Panc1 (cell line): ENCODE measurements at regions of chr20 and their contacts with region 1.

Region 1: GRCh38 chr20:60729135-60729900 is 522.7 kb upstream of the CDH4 start:
- DNase-seq: no peak
- ATAC-seq: no peak
- H3K4me3 ChIP-seq: no peak overlapping the region
- H3K27ac ChIP-seq: no peak overlapping the region
- H3K4me1 ChIP-seq: no peaks in the 10 kb centered on the region
- H3K27me3 ChIP-seq: no peaks in the 10 kb centered on the region
- CTCF ChIP-seq: no peak

Region 2: GRCh38 chr20:60632391-60633262 is 96.7 kb before region 1 on chr20:
- CTCF ChIA-PET with region 1: no interaction called
- POLR2A ChIA-PET with region 1: no interaction called
- in situ Hi-C with region 1: no loop called
- intact Hi-C with region 1: no loop called
- DNase-seq: no peak
- ATAC-seq: no peak
- H3K4me3 ChIP-seq: no peak overlapping the region
- H3K27ac ChIP-seq: no peak overlapping the region
- H3K4me1 ChIP-seq: no peaks in the 10 kb centered on the region
- H3K27me3 ChIP-seq: no peaks in the 10 kb centered on the region; the same call in 1 of the 2 replicates
- CTCF ChIP-seq: no peak

Region 3: GRCh38 chr20:60718743-60719322 is 10.5 kb before region 1 on chr20:
- CTCF ChIA-PET with region 1: interaction called, 11 read pairs
- POLR2A ChIA-PET with region 1: no interaction called
- in situ Hi-C with region 1: no loop called
- intact Hi-C with region 1: no loop called
- DNase-seq: no peak
- ATAC-seq: no peak
- H3K4me3 ChIP-seq: no peak overlapping the region
- H3K27ac ChIP-seq: no peak overlapping the region
- H3K4me1 ChIP-seq: no peaks in the 10 kb centered on the region
- H3K27me3 ChIP-seq: no peaks in the 10 kb centered on the region; the same call in 1 of the 2 replicates
- CTCF ChIP-seq: 0 out of 2 replicates have a peak, but pooled peaks have one; percentile 5

Region 4: GRCh38 chr20:60749804-60750602 is 20.7 kb after region 1 on chr20:
- CTCF ChIA-PET with region 1: no interaction called
- POLR2A ChIA-PET with region 1: no interaction called
- in situ Hi-C with region 1: no loop called
- intact Hi-C with region 1: no loop called
- DNase-seq: no peak
- ATAC-seq: no peak
- H3K4me3 ChIP-seq: no peak overlapping the region
- H3K27ac ChIP-seq: no peak overlapping the region
- H3K4me1 ChIP-seq: no peaks in the 10 kb centered on the region
- H3K27me3 ChIP-seq: no peaks in the 10 kb centered on the region
- CTCF ChIP-seq: no peak